ENCODE measurements at regions of chr11 and their contacts with region 1.

Region 1: DNA sequence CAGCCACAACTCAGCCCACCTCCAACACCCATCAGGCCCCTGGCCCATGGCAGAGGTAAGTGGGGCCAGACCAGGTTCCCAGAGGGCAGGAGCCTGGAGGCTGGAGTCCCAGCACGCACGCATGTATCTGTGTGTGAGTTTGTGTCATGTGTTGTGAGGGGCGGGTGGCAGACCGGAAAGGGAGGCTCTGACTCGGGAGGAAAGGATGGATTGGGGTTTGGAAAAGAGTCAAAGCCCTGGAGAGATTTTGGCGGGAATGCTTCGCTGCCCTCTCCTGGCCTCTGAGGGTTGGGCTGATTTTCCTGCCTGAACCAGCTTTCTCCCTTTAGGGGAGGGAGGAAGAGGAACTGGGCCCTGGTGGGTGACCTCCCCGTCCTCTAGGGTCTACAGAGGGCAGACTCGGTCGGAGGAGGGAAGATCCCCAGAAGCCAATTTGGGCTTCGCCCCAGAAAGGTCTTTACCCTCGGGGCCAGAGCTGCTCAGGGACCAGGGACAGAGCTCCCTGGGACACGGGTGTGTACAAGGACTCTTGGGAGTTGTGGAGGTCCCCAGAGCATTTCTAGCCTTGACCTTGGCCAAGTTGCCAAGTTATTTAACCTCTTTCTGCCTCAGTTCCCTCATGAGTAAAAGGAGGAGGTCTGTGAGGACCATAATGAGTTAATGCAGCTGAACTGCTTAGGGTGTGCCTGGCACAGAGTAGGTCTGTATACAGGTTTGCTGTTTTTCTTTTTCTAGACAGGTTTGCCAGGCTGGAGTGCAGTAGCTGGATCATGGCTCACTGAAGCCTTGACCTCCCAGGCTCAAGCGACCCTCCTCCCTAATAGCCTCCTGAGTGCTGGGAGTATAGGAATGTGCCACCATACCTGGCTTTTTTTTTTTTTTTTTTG is 6.9 kb downstream of the C11orf68 start:
- DNase-seq: peak in 1 of 2 donors; percentile 90
- H3K4me3 ChIP-seq: no peak overlapping the region
- H3K27ac ChIP-seq: peak overlapping the region; percentile 35 to 72
- H3K4me1 ChIP-seq: peaks cover 21 to 42% of the 10 kb centered on the region in 2 donors
- H3K27me3 ChIP-seq: no peaks in the 10 kb centered on the region
- CTCF ChIP-seq: peak; percentile 43 to 53 (median 47)

Region 2: GRCh38 chr11:65900125-65900898 is 11.6 kb before region 1 on chr11 and contains the start of gene FOSL1:
- intact Hi-C with region 1: loop called (anchors 1 kb)
- DNase-seq: peak; percentile 80 to 96
- H3K4me3 ChIP-seq: peak within 1 kb of the TSS; percentile 70 to 80
- H3K27ac ChIP-seq: peak within 1 kb of the TSS; percentile 84 to 85
- H3K4me1 ChIP-seq: peaks cover 7 to 20% of the 10 kb centered on the region in 2 donors
- H3K27me3 ChIP-seq: no peaks in the 10 kb centered on the region
- CTCF ChIP-seq: no peak
- total RNA-seq, gene FOSL1: 123 TPM

Measured in ascending aorta (tissue), 2 donors.